Psoas muscle (tissue), 8 donors: ENCODE measurements at regions of chr2 and their contacts with region 1.

Region 1: DNA sequence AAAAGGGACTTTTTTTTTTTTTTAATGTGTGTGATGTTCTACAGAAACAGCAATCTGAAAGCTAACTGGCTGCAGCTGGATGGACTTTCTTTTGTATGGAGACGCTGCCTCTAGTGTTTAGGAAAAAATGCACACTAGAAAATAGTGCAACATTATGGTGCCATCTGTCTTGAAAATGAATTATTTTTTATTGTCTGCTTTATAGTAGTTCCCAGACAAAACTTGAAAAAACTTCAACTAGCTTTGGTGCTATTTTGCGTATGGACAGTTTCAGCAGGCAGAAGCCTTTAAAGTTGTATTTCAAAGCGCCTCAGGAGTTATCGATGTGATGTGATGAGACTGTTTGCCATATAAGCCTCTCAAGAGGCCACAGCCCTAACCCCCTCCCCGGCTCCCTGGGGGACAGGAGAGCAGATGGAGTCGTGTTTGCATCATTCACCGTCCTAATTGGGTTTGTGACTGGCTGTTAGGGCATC is 86.9 kb downstream of the LTBP1 start:
- DNase-seq: no peak
- ATAC-seq: peak; percentile 55 to 90 (median 75)
- H3K4me3 ChIP-seq: peak overlapping the region; percentile 31
- H3K27ac ChIP-seq: no peak overlapping the region
- H3K4me1 ChIP-seq: peaks cover 7% of the 10 kb centered on the region
- H3K27me3 ChIP-seq: no peaks in the 10 kb centered on the region
- CTCF ChIP-seq: peak; percentile 52

Region 2: DNA sequence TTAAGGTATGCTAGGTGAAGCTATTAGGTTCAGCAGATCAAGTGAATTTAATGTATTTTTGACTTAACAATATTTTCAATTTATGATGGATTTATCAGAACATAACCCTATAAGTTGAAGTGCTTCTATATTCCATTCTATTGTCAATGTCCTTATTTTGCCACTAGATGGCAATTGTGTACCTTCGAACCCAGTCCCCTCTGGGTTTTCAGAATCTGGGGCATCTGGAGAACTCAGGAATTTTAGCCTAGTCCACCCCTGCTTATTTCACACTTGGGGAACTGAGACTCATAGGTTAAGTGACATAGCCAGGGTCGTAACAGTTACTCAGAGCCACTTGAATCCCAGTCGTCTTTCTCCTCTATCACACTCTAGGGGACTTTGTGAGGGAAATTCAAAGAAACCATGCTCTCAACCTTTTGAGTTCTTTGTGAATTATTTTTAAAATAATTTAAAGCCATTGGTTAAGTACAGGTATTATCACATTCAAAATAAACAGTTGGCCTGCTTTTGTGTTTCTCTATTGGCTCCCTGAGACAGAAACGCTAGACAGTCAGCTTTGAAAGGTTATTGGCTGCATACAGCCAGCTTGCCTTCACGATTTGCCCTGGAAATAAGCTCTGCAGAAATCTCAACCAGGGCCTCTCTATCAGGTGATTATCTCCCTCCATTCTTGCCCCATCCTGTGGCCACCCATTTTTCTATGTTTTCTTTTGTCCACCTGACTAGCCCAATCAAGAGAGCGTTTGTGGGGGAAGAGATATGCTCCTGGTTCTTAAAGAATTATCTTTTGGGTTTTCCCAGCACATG is 260.8 kb before region 1 on chr2:
- intact Hi-C with region 1: loop called (anchors 5 kb)
- DNase-seq: no peak
- ATAC-seq: peak; percentile 61 to 80 (median 62)
- H3K4me3 ChIP-seq: no peak overlapping the region
- H3K27ac ChIP-seq: no peak overlapping the region
- H3K4me1 ChIP-seq: no peaks in the 10 kb centered on the region
- H3K27me3 ChIP-seq: no peaks in the 10 kb centered on the region
- CTCF ChIP-seq: peak; percentile 77

Region 3: DNA sequence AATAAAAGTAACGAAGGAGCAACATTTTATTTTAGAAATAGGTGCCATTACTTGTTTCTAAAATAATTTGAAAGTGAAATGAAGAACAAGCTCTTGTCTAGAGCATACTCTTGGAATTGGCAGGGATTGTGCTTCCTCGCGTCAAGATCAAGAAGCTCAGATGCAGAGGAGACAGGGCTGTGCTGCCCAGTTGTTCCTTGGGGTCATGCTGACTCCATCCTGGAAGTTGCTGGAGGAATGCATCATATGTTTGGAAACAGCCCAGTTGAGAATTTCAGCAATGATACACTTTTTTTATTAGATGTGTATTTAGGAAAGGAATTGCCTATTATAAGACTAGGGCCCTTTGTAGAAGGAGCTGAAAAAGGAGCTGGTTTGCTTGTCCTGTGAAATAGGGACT is 69.7 kb before region 1 on chr2:
- intact Hi-C with region 1: no loop called
- DNase-seq: no peak
- ATAC-seq: no peak
- H3K4me3 ChIP-seq: no peak overlapping the region
- H3K27ac ChIP-seq: no peak overlapping the region
- H3K4me1 ChIP-seq: no peaks in the 10 kb centered on the region
- H3K27me3 ChIP-seq: no peaks in the 10 kb centered on the region
- CTCF ChIP-seq: no peak

Region 4: GRCh38 chr2:33267756-33268155 is 234.1 kb after region 1 on chr2:
- intact Hi-C with region 1: loop called (anchors 2 to 5 kb)
- DNase-seq: no peak
- ATAC-seq: no peak
- H3K4me3 ChIP-seq: no peak overlapping the region
- H3K27ac ChIP-seq: no peak overlapping the region
- H3K4me1 ChIP-seq: peaks cover 11% of the 10 kb centered on the region
- H3K27me3 ChIP-seq: no peaks in the 10 kb centered on the region
- CTCF ChIP-seq: no peak

Region 5: GRCh38 chr2:33372940-33373553 is 339.4 kb after region 1 on chr2:
- intact Hi-C with region 1: loop called (anchors 5 to 10 kb)
- DNase-seq: no peak
- ATAC-seq: peak in 3 of 4 donors; percentile 44 to 67 (median 49)
- H3K4me3 ChIP-seq: no peak overlapping the region
- H3K27ac ChIP-seq: no peak overlapping the region
- H3K4me1 ChIP-seq: no peaks in the 10 kb centered on the region
- H3K27me3 ChIP-seq: no peaks in the 10 kb centered on the region
- CTCF ChIP-seq: peak; percentile 74

Region 6: GRCh38 chr2:33441235-33441810 is 407.7 kb after region 1 on chr2:
- intact Hi-C with region 1: loop called (anchors 10 kb)
- DNase-seq: peak in 1 of 2 donors; percentile 23
- ATAC-seq: peak; percentile 70 to 88 (median 78)
- H3K4me3 ChIP-seq: no peak overlapping the region
- H3K27ac ChIP-seq: peak overlapping the region; percentile 76
- H3K4me1 ChIP-seq: peaks cover 34% of the 10 kb centered on the region
- H3K27me3 ChIP-seq: no peaks in the 10 kb centered on the region
- CTCF ChIP-seq: peak; percentile 72